ENCODE measurements at regions of chr2 and their contacts with region 1.

Region 1: DNA sequence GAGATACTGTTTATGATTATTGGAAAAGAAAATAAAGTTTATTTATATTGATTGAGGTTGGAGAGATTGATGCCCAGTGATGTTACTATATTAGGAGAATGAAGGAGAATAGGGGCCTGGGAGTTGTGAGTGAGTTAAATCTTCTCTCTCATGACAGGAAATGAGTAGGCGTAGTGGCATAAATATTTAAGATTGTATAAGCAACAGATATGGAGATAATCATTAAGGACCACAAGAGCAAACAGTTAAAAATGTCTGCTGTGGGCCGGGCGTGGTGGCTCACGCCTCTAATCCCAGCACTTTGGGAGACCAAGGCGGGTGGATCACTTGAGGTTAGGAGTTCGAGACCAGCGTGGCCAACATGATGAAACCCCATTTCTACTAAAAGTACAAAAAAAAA is 62.7 kb downstream of the PTRHD1 start:
- DNase-seq: no peak

Region 2: DNA sequence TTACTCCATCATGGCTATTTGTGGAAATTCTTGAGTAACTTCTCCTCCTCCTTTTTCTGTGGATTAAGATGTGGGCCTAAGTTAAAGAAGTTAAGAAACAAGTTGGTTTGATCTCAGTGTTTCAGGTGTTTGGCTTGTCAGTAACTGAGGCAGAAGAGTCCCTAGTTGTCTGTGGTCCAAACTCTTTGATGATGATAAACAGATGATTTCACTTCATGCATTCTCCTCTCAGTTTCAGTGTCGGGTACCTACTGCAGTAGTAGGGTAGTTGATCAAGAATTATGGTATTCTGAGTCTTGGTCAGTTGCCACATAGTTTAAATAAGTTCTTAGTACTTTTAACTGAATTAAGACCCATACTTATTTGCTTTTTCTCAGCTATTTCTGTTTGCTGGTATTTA is 153.9 kb before region 1 on chr2:
- intact Hi-C with region 1: no loop called
- DNase-seq: no peak

Region 3: DNA sequence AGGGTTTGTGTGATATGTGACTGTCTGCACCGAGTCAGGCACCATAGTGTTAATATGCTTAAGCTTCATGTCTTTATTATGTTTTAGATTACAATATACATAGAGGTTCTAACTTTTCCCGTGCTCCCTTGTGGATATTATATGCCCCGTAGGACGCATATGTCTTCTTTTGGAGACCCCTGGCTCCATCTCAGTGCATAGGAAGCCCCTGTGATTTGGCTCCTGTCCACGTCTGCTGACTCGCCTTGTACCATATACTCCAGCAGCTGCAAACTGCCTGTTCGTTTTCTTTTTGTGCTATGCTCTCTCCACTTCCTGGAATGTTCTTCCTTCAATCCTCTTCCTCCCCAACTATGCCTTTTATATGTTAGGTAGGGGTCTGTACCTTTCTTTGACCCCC is 48.2 kb before region 1 on chr2:
- intact Hi-C with region 1: no loop called
- DNase-seq: no peak

Region 4: GRCh38 chr2:24785671-24786321 is 55.3 kb after region 1 on chr2:
- intact Hi-C with region 1: loop called (anchors 10 kb)
- DNase-seq: no peak

Measured in head of caudate nucleus (tissue), 42 donors.